Activated naive CD4-positive, alpha-beta T cell treated with anti-CD3 and anti-CD28 coated beads for 36 hours (primary cell): ENCODE measurements at regions of chr12 and their contacts with region 1.

Region 1: GRCh38 chr12:15856097-15856982 is 25.8 kb upstream of the STRAP start:
- DNase-seq: peak; percentile 66
- H3K4me3 Mint-ChIP-seq: no peak overlapping the region
- H3K27ac Mint-ChIP-seq: no peak overlapping the region
- H3K4me1 Mint-ChIP-seq: no peaks in the 10 kb centered on the region
- H3K27me3 Mint-ChIP-seq: peaks cover 3% of the 10 kb centered on the region

Region 2: GRCh38 chr12:15227004-15227679 is 629.2 kb before region 1 on chr12:
- CTCF ChIA-PET with region 1: no interaction called
- intact Hi-C with region 1: loop called (anchors 5 kb)
- DNase-seq: peak; percentile 56
- H3K4me3 Mint-ChIP-seq: no peak overlapping the region
- H3K27ac Mint-ChIP-seq: no peak overlapping the region
- H3K4me1 Mint-ChIP-seq: no peaks in the 10 kb centered on the region
- H3K27me3 Mint-ChIP-seq: peaks cover 18% of the 10 kb centered on the region

Region 3: GRCh38 chr12:15276088-15276698 is 580.1 kb before region 1 on chr12:
- CTCF ChIA-PET with region 1: interaction called, 4 read pairs
- intact Hi-C with region 1: loop called (anchors 1 kb)
- DNase-seq: no peak
- H3K4me3 Mint-ChIP-seq: no peak overlapping the region
- H3K27ac Mint-ChIP-seq: no peak overlapping the region
- H3K4me1 Mint-ChIP-seq: peaks cover 3% of the 10 kb centered on the region
- H3K27me3 Mint-ChIP-seq: peaks cover 5% of the 10 kb centered on the region

Region 4: GRCh38 chr12:15772405-15773018 is 83.8 kb before region 1 on chr12:
- CTCF ChIA-PET with region 1: interaction called, 7 read pairs
- intact Hi-C with region 1: loop called (anchors 1 kb)
- DNase-seq: no peak
- H3K4me3 Mint-ChIP-seq: no peak overlapping the region
- H3K27ac Mint-ChIP-seq: no peak overlapping the region
- H3K4me1 Mint-ChIP-seq: no peaks in the 10 kb centered on the region
- H3K27me3 Mint-ChIP-seq: peaks cover 7% of the 10 kb centered on the region

Region 5: DNA sequence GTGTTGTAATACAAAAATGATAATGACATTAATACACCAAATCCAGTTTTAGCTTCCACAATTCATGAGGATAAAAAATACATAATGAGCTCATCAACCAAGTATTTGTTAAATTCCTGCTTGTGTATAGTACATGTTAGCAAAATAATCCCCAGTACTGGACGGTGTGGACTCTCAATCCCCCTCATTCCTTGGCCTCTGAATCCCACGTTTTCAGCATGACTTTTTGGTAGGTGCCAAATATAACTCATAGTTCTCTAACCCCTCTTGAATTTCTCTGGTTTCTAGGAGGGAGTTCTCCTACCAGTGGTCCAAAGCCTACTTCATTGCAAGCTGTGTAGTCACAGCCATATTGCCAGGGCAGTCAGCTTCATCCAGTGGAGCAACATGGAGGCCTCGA is 25.8 kb before region 1 on chr12:
- CTCF ChIA-PET with region 1: no interaction called
- intact Hi-C with region 1: no loop called
- DNase-seq: no peak
- H3K4me3 Mint-ChIP-seq: no peak overlapping the region
- H3K27ac Mint-ChIP-seq: no peak overlapping the region
- H3K4me1 Mint-ChIP-seq: no peaks in the 10 kb centered on the region
- H3K27me3 Mint-ChIP-seq: no peaks in the 10 kb centered on the region

Region 6: DNA sequence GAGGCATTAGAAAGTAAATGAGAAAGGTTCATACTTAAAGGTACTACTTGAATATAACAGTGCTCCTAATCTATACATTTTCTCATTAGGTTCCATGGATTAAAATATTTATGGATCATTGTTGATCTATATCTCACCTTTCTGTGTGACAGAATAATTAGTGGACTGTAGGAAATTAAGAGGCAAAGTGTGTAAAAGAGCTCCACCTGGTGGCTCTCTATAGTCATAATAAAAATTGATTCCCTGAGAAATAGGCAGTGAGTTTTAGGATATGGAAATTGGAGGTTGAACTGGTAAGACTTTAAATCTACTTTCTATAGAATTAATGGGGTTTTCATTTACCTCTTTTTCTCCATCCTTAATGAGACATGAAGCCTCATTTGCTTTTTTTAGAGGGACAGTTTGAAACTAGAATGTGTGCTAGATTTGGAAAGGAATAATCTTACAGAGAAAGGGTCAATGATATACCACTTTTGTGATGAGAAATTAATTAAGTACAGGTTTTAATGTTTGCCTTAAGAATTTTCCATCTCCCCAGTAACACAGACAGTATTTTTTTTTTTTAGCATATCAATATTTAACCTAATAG is 43.0 kb after region 1 on chr12:
- CTCF ChIA-PET with region 1: interaction called, 3 read pairs
- intact Hi-C with region 1: loop called (anchors 2 kb)
- DNase-seq: no peak
- H3K4me3 Mint-ChIP-seq: no peak overlapping the region
- H3K27ac Mint-ChIP-seq: no peak overlapping the region
- H3K4me1 Mint-ChIP-seq: peaks cover 4% of the 10 kb centered on the region
- H3K27me3 Mint-ChIP-seq: no peaks in the 10 kb centered on the region